Right ventricle myocardium inferior (tissue), 1 donor: ENCODE measurements at regions of chr18 and their contacts with region 1.

Region 1: DNA sequence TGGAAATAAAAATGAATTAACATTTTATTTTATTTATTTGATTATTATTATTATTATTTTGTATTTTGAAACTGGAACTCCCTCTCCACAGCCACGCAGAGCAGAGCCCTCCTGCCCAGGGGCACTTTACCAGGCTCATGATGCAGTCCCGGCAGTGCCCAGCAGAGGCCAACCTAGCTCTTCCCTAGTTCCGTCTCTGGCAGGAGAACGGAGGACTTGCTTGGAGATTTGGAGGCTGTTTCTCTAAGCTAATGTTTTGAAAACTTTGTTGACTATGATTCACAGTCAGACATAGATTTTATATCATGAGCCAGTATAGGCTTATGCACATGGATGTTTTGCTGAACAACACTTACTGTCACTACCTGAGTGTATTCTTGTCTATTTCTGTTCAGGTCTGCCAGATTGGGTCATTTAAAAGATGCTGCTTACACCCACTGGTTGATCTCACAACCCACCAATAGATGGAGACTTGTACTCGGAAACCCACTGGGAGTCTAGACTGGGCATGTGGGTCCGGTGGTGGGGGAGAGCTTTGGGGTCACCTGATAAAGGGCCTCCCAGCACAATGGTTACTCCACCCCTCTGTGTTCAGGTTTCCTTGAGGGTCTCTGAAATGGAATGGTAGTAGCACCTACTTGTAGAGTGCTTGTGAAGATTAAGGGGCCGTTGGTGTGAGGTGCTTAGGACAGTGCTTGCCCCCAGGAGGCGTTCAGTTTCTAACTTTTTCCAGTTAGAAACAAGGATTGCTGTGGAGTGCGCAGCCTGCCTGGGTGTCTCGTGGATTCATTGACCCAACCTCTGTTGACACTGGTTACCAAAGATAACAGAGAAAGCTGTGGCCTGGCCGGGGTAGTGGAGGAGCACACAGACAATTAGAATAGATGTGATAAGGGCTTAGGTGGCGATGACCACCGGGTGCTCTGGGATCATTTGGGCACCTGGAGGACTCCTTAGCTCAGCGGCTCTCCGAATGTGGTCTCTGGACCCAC is 177.3 kb downstream of the HAUS1 start:
- DNase-seq: peak; percentile 78
- ATAC-seq: peak; percentile 79

Region 2: DNA sequence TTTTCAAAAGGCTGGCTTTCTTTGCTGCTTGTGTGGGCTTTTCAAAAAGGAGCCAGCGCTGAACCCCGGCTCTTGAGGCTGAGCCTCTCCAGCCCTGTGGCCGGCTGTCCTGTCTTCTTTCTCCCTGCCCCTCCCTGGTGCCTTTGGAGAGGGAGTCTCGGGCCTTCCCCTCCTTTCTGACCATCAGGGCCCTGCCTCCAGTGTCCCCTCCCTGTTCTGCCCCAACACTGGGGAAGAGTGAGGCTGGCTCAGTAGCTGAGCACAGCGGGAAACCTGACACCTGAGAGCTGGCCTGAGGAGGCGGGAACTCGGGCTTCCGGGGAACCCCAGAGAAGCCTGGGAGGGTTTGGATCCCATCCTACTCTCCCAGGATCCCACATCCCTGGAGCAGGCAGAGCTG is 143.4 kb after region 1 on chr18:
- intact Hi-C with region 1: loop called (anchors 10 kb)
- DNase-seq: no peak
- ATAC-seq: no peak

Region 3: DNA sequence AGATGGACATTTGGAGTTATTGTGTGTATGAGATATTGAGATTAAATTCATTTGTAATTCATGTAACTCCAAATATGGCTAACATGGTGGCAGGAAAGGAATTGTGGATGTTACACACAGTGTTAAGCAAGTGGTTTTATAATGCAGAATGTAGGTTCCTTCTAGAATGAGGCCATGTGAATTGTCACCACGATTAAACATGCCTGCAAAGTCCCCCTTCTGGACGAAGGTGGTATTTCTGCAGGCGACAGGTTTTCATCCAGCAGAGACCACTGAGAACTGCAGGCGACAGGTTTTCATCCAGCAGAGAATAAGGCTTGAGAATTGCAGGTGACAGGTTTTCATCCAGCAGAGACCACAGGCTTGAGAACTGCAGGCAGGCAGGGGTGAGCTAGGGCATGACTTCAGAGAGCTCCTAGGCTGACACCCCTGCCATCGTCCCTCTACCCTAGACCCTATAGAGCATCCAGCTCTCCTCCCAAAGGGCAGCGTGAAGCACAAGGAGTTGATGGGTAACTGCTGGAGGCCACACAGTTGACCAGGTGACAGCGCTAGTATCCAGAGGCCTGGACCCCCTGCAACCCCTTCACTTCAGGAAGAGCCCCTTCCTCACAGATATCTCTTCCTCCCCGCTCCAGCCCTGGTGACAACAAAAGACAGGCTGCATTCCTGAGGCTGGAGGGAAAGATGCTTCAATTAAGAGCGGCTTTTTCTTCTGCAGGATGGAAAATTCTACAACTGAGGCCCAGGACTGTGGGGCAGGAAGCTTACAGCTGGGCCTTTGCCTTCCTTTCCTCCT is 199.8 kb after region 1 on chr18:
- intact Hi-C with region 1: loop called (anchors 2 kb)
- DNase-seq: no peak
- ATAC-seq: no peak

Region 4: DNA sequence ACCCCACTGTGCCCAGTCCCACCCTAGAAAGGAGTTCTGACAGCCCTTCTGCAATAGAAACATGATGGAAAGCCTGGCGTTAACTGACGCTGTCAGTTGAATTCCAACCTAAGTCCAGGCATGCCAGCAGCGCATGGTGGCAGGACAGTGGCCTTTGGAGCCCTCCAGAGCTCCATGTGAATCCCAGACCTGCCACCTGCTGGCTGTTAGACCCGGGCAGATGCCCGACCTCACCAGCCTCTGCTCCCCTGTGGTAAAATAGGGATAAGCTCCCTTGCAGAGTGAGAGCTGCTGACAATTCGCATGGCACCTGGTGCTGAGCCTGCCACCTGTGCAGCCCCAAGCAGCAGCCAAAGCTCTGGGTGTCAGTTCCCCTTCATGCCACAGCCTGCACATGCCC is 237.0 kb after region 1 on chr18:
- intact Hi-C with region 1: loop called (anchors 1 kb)
- DNase-seq: peak; percentile 76
- ATAC-seq: peak; percentile 88